ENCODE measurements at regions of chr6 and their contacts with region 1.

Region 1: GRCh38 chr6:96897383-96898240 is at the start of gene NDUFAF4:
- DNase-seq: peak; percentile 95
- ATAC-seq: peak; percentile 93
- H3K4me3 Mint-ChIP-seq: peak within 1 kb of the TSS; percentile 97
- H3K27ac Mint-ChIP-seq: peak within 1 kb of the TSS; percentile 94
- H3K4me1 Mint-ChIP-seq: peaks cover 27% of the 10 kb centered on the region
- H3K27me3 Mint-ChIP-seq: peaks cover 4% of the 10 kb centered on the region
- CTCF ChIP-seq: no peak
- total RNA-seq, gene NDUFAF4: 39.9 and 40.7 TPM in 2 replicates

Region 2: DNA sequence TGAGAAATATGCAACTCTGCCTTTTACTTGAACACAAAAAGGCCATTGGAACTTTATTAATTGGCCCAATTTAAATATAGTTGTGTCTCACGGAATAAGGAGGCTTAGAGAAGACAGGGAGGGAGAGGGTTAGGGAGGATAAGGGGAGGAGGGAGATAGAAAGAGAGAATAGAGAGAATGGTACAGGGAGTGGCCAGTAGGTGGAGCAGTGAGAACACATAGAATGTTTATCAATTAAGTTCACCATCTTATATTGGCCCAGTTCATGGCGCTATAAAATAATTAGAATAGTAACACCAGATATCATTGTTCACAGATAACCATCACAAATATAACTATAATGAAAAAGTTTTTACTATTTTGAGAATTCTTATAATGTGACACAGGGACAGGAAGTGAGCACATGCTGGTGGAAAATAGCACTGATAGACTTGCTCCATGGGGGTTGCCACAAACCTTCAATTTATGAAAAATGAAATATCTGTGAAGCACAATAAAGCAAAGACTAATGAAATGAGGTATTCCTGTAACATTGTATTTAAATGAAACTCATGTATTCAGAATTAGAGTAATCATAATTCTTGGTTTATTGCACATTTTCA is 1694.4 kb before region 1 on chr6:
- CTCF ChIA-PET with region 1: no interaction called
- POLR2A ChIA-PET with region 1: no interaction called
- intact Hi-C with region 1: loop called (anchors 5 kb)
- DNase-seq: no peak
- ATAC-seq: no peak
- H3K4me3 Mint-ChIP-seq: no peak overlapping the region
- H3K27ac Mint-ChIP-seq: no peak overlapping the region
- H3K4me1 Mint-ChIP-seq: no peaks in the 10 kb centered on the region
- H3K27me3 Mint-ChIP-seq: no peaks in the 10 kb centered on the region
- CTCF ChIP-seq: no peak

Region 3: DNA sequence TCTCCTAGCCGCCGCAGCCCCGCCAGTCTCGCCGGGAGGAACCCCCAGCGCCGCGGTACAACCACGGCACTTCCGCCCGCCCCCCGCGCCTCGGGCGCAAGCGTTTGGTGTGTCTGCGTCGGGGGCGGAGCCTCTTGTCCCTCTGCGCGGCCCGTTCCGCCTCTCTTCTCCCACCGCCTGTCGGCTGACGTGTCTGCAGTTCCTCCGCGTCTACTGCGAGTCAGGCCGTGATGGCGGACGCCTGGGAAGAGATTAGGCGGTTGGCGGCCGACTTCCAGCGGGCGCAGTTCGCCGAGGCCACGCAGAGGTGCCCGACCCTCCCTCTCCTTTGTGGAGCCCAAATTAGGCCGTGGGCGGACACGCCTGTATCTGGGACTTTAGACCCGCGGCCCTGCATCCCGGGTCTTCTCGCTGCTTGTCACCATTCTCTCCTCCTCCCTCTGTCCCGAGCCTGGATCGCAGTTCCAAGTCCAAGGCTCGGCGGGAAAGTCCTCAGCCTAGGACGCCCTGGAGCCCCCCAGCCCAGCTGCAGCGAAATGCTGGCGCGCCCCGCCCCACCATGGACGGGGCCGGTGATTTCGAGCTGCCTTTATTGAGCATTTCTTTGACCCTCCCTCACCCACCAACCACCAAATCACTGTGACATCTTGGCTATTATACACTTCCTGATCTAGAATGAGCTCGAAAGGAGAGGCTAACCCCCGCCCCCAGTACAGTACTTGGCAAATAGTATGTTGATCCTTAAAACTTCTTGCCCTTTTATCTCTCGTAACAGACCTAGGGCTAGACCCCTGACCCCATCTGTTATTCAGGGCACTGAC is 375.8 kb before region 1 on chr6 and contains the start of gene UFL1:
- CTCF ChIA-PET with region 1: no interaction called
- POLR2A ChIA-PET with region 1: interaction called, 4 read pairs
- intact Hi-C with region 1: loop called (anchors 1 kb)
- DNase-seq: peak; percentile 91
- ATAC-seq: peak; percentile 94
- H3K4me3 Mint-ChIP-seq: peak within 1 kb of the TSS; percentile 100
- H3K27ac Mint-ChIP-seq: peak within 1 kb of the TSS; percentile 100
- H3K4me1 Mint-ChIP-seq: peaks cover 27% of the 10 kb centered on the region
- H3K27me3 Mint-ChIP-seq: no peaks in the 10 kb centered on the region
- CTCF ChIP-seq: no peak
- total RNA-seq, gene UFL1: 20.7 and 23.6 TPM in 2 replicates

Region 4: DNA sequence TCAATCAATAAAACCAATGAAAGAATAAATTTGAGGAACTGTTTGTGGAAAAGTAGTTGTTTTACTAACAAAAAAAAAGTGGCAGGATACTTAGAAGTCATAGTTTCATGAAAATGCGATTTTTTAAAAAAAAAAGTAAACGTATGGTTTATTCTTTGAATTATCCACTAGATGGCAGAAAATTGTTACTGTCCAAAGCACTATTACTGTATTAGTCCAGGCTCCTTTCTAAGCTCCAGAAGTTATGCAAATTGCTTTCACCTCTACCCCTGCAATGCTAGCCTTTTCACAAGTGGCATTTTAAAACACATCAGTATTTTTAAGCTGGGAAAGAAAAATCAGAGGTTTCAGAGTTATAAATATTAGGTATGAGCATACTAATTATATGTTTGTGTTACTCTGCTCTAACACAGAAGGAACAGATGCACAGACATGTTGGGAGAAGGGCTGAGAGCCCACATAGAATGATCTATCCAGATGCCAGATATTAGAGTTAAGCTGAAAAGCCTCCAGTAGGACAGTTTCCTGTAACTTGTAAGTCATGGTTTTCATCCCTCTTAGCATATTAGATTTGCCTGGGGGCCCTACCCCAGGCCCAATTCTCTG is 270.8 kb before region 1 on chr6:
- CTCF ChIA-PET with region 1: interaction called, 4 read pairs
- POLR2A ChIA-PET with region 1: interaction called, 4 read pairs
- intact Hi-C with region 1: loop called (anchors 2 kb)
- DNase-seq: no peak
- ATAC-seq: peak; percentile 57
- H3K4me3 Mint-ChIP-seq: no peak overlapping the region
- H3K27ac Mint-ChIP-seq: no peak overlapping the region
- H3K4me1 Mint-ChIP-seq: peaks cover 6% of the 10 kb centered on the region
- H3K27me3 Mint-ChIP-seq: peaks cover 4% of the 10 kb centered on the region
- CTCF ChIP-seq: no peak

Region 5: DNA sequence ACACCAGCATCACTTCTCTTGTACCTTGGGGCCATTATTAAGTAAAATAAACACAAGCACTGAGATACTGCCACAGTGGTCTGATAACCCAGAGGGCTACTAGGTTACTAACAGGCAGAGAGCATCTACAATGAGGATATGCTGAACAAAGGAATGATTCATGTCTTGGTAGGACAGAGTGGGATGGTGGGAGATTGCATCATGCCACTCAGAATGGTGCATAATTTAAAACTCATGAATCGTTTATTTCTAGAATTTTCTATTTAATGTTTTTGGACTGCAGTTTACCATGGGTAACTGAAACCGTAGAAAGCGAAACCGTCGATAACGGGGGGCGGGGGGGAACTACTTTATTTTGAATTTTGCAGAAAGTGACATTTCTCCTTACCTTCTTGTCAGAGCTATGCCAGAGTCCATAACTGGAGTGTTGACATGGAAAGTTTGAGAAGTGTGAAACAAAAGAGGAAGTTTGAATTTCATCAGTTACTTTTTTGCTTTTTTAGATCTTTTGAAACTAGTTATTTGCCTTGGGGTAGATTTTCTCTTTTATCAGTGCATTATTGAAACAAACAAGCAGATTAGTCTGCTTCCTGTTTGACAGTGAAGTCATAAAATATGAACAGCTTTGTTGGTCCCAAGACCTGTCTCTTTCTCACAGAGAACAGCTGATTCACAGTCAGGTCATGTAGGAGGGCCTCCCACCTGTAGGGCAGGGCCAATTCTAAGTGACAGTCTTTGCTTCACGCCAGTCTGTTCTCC is 151.8 kb after region 1 on chr6:
- CTCF ChIA-PET with region 1: no interaction called
- POLR2A ChIA-PET with region 1: no interaction called
- intact Hi-C with region 1: loop called (anchors 2 kb)
- DNase-seq: no peak
- ATAC-seq: peak; percentile 74
- H3K4me3 Mint-ChIP-seq: peak overlapping the region; percentile 50
- H3K27ac Mint-ChIP-seq: peak overlapping the region; percentile 51
- H3K4me1 Mint-ChIP-seq: peaks cover 23% of the 10 kb centered on the region
- H3K27me3 Mint-ChIP-seq: no peaks in the 10 kb centered on the region
- CTCF ChIP-seq: no peak

Region 6: GRCh38 chr6:97394160-97394748 is 496.6 kb after region 1 on chr6:
- CTCF ChIA-PET with region 1: no interaction called
- POLR2A ChIA-PET with region 1: no interaction called
- intact Hi-C with region 1: loop called (anchors 5 kb)
- DNase-seq: no peak
- ATAC-seq: peak; percentile 81
- H3K4me3 Mint-ChIP-seq: no peak overlapping the region
- H3K27ac Mint-ChIP-seq: no peak overlapping the region
- H3K4me1 Mint-ChIP-seq: no peaks in the 10 kb centered on the region
- H3K27me3 Mint-ChIP-seq: peaks cover 8% of the 10 kb centered on the region
- CTCF ChIP-seq: peak; percentile 97